Activated CD4-positive, alpha-beta T cell treated with anti-CD3 and anti-CD28 coated beads, Interleukin-2, amount 10 ng/mL, durations not matched to agents 24 days and 14 days (primary cell): ENCODE measurements at regions of chrX and their contacts with region 1.

Region 1: DNA sequence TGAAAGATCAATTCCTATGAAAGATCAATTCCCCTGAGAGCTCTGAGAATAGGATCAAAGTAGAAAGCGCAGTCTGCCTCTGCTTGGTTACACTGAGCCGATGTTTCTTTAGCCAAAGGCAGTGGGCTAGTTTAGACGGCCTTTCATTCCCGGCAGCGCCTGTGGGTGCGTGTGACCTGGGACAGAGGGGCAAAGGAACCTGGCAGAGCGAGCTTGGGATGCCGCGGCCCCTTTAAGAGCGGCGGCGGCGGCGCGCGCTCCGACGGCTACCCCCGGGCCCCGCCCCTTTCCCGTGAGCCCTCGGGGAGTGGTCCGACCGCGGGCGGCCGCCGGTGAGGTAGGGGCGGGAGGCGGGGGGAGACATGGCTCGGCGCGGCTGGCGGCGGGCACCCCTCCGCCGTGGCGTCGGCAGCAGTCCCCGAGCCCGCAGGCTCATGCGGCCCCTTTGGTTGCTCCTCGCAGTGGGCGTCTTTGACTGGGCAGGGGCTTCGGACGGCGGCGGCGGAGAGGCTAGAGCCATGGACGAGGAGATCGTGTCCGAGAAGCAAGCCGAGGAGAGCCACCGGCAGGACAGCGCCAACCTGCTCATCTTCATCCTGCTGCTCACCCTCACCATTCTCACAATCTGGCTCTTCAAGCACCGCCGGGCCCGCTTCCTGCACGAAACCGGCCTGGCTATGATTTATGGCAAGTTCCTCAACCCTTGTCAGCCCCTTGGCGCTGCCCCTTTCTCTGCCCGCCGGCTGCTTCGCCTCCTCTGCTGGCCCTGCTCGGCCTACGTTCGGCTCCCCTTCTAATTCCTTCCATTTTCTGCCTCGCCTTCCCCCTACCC is at the start of gene SLC9A6:
- DNase-seq: peak; percentile 91
- H3K4me3 Mint-ChIP-seq: peak within 1 kb of the TSS; percentile 92
- H3K27ac Mint-ChIP-seq: peak within 1 kb of the TSS; percentile 85
- H3K4me1 Mint-ChIP-seq: peaks cover 40% of the 10 kb centered on the region
- H3K27me3 Mint-ChIP-seq: no peaks in the 10 kb centered on the region
- total RNA-seq, gene SLC9A6: 10.9 and 12.4 TPM in 2 replicates

Region 2: DNA sequence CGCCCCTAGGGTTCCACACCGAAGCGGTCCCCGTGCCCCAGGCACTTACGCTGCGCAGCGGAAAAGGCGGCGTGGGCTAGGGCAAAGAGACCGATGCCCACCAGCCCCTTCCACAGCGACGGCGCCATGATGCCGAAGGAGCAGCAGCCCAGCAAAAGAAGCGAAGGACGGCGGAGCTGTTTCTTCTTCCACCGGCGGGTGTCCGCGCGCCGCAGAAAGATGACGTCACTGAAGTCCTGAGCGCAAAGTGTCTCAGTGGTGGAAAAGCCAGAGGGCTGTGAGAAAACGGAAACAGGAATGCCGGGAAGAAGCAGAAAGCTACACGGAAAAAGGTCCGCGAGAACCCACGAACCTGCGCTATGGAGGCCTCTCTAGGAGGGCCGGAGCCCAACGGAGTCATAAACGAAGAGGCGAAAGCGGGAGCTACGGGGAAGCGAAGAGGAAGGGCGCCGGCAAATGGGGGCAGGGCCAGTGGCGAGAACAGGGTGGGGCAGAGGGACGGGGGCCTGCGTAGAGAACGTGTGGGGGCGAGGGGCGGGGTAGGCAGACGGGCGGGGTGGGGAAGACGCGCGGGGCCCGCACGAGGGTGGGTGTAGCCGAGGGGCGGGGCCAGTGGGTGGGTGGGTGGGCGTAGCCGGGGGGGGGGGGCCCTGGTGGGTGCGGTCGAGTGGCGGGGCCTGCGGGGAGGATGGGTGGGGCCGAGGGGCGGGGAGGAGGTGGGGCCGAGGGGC is 11.6 kb before region 1 on chrX and contains the start of gene MMGT1:
- intact Hi-C with region 1: loop called (anchors 1 kb)
- DNase-seq: peak; percentile 93
- H3K4me3 Mint-ChIP-seq: peak within 1 kb of the TSS; percentile 100
- H3K27ac Mint-ChIP-seq: peak within 1 kb of the TSS; percentile 99
- H3K4me1 Mint-ChIP-seq: peaks cover 28% of the 10 kb centered on the region
- H3K27me3 Mint-ChIP-seq: peaks cover 3% of the 10 kb centered on the region
- total RNA-seq, gene MMGT1: 27.1 and 27.4 TPM in 2 replicates